A673 (cell line): ENCODE measurements at regions of chr17 and their contacts with region 1.

Region 1: GRCh38 chr17:27586203-27586721 is 44.7 kb upstream of the LGALS9 start:
- DNase-seq: no peak
- H3K4me3 ChIP-seq: no peak overlapping the region
- H3K27ac ChIP-seq: no peak overlapping the region
- H3K4me1 ChIP-seq: no peaks in the 10 kb centered on the region
- H3K27me3 ChIP-seq: no peaks in the 10 kb centered on the region
- CTCF ChIP-seq: no peak

Region 2: GRCh38 chr17:27526604-27527230 is 59.5 kb before region 1 on chr17:
- CTCF ChIA-PET with region 1: no interaction called
- POLR2A ChIA-PET with region 1: no interaction called
- intact Hi-C with region 1: loop called (anchors 10 kb)
- DNase-seq: peak; percentile 30
- H3K4me3 ChIP-seq: no peak overlapping the region
- H3K27ac ChIP-seq: no peak overlapping the region
- H3K4me1 ChIP-seq: peaks cover 39% of the 10 kb centered on the region
- H3K27me3 ChIP-seq: no peaks in the 10 kb centered on the region
- CTCF ChIP-seq: no peak